ENCODE measurements at regions of chr11 and their contacts with region 1.

Region 1: GRCh38 chr11:112297248-112297866 is 36.7 kb upstream of the PLET1 start:
- DNase-seq: peak; percentile 62
- H3K4me3 Mint-ChIP-seq: peak overlapping the region; percentile 14
- H3K27ac Mint-ChIP-seq: peak overlapping the region; percentile 67
- H3K4me1 Mint-ChIP-seq: peaks cover 36% of the 10 kb centered on the region
- H3K27me3 Mint-ChIP-seq: no peaks in the 10 kb centered on the region

Region 2: DNA sequence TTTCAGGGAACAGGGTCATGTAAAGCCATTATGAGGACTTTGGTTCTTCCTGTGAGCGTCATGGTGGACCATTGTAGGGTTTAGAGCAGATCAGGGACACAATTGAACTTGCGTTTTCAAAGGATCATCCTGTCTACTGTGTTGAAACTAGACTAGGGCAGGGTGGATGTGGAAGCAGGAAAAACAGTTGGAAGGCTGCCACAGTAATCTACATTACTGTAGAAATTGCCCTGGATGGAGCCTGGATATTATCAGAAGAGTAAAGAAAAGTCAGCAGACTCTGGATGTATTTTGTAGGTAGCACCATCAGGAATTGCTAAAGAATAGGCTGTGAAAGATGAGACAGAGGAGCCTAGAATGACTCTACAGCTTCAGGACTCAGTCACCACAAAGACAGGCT is 1046.4 kb before region 1 on chr11:
- CTCF ChIA-PET with region 1: no interaction called
- intact Hi-C with region 1: no loop called
- DNase-seq: no peak
- H3K4me3 Mint-ChIP-seq: no peak overlapping the region
- H3K27ac Mint-ChIP-seq: no peak overlapping the region
- H3K4me1 Mint-ChIP-seq: no peaks in the 10 kb centered on the region
- H3K27me3 Mint-ChIP-seq: peaks cover 12% of the 10 kb centered on the region

Region 3: GRCh38 chr11:111446404-111447111 is 850.8 kb before region 1 on chr11:
- CTCF ChIA-PET with region 1: no interaction called
- intact Hi-C with region 1: no loop called
- DNase-seq: peak; percentile 87
- H3K4me3 Mint-ChIP-seq: no peak overlapping the region
- H3K27ac Mint-ChIP-seq: no peak overlapping the region
- H3K4me1 Mint-ChIP-seq: peaks cover 16% of the 10 kb centered on the region
- H3K27me3 Mint-ChIP-seq: no peaks in the 10 kb centered on the region

Region 4: DNA sequence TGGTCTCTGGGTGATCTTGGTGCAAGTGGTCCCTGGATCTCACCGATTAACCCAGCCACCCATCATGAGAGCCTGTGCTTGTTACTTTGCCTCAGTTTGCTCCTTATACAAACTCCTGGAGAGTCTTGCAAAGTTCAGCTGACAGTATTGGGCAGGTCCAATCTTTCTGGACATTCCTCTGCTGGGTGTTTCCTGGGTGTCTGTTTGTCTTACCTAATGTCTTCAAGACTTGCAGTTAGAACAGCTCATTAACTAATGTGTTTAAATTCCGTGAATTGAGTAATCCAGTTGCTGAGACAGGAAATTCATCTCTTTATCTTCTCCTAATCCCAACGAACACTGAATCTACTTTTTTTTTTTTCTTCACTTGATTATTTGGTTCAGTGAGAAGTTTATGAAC is 101.5 kb before region 1 on chr11:
- CTCF ChIA-PET with region 1: no interaction called
- intact Hi-C with region 1: no loop called
- DNase-seq: no peak
- H3K4me3 Mint-ChIP-seq: no peak overlapping the region
- H3K27ac Mint-ChIP-seq: no peak overlapping the region
- H3K4me1 Mint-ChIP-seq: no peaks in the 10 kb centered on the region
- H3K27me3 Mint-ChIP-seq: no peaks in the 10 kb centered on the region

Region 5: DNA sequence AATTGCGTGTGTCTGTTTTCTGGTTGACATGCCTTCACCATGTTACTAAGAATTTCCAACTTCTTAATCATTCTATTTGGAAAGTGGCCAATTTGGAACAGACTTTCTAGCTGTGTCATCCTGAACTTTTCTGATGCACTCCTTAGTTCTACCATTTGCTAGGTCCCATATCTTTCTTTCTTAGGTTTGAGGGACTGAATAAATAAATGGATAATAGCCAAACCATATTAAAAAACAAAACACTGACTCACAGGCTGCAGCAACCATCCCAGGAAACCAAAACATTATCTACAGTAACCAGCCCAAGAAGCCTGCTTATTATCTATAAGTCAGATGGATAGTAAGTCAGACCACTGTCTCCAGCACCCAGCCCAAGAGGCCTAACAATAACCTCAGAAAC is 20.8 kb after region 1 on chr11:
- CTCF ChIA-PET with region 1: no interaction called
- intact Hi-C with region 1: loop called (anchors 2 kb)
- DNase-seq: no peak
- H3K4me3 Mint-ChIP-seq: no peak overlapping the region
- H3K27ac Mint-ChIP-seq: no peak overlapping the region
- H3K4me1 Mint-ChIP-seq: peaks cover 26% of the 10 kb centered on the region
- H3K27me3 Mint-ChIP-seq: no peaks in the 10 kb centered on the region

Region 6: DNA sequence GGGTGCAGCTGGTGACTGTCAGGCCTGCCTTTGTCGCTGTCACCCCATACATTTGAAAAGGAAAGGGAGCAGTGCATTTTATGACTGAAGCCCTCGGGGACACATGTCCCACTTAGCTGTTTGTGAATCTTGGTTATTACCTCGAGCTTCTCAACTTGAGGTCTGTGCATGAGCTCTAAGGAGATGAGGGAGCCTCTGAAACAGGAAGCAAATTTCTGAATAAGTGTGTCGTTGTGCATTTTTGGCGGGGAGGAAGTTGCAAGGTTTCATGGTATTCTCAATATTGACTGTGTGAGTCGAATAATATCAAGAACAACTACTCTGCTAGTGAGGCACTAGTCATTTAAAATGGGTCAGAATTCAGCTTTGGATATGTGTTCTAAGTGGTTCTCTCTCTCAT is 113.0 kb after region 1 on chr11:
- CTCF ChIA-PET with region 1: no interaction called
- intact Hi-C with region 1: no loop called
- DNase-seq: peak; percentile 29
- H3K4me3 Mint-ChIP-seq: no peak overlapping the region
- H3K27ac Mint-ChIP-seq: no peak overlapping the region
- H3K4me1 Mint-ChIP-seq: peaks cover 7% of the 10 kb centered on the region
- H3K27me3 Mint-ChIP-seq: no peaks in the 10 kb centered on the region